Mucosa of descending colon (tissue), 3 donors: ENCODE measurements at regions of chrX and their contacts with region 1.

Region 1: GRCh38 chrX:68828740-68829552 is at the start of gene EFNB1:
- DNase-seq: peak; percentile 91 to 93 (median 93)
- ATAC-seq: peak; percentile 86
- H3K4me3 ChIP-seq: peak within 1 kb of the TSS; percentile 63
- H3K4me1 ChIP-seq: peaks cover 8% of the 10 kb centered on the region
- CTCF ChIP-seq: no peak
- total RNA-seq, gene EFNB1: 41.7 to 81.5 (median 66.3) TPM

Region 2: DNA sequence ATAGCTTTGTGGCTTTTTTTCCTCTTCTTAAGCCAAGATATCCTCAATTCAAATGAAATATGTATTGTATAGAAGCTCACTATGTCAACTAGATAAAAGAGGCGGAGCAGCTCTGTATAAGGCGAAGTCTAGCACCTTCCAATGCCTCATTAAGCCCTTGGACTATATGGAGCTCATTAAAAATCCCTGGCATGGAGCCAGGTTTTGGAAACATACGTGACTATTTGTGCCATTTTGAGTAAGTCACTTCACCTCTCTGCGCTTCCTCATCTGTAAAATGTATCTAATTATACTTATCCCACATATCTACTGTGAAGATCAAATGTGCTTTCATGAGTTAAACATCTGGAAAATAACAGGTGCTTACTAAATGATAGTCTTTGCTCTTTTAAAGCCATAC is 272.9 kb before region 1 on chrX:
- intact Hi-C with region 1: no loop called
- DNase-seq: no peak
- ATAC-seq: no peak
- H3K4me3 ChIP-seq: no peak overlapping the region
- H3K4me1 ChIP-seq: no peaks in the 10 kb centered on the region
- CTCF ChIP-seq: no peak

Region 3: DNA sequence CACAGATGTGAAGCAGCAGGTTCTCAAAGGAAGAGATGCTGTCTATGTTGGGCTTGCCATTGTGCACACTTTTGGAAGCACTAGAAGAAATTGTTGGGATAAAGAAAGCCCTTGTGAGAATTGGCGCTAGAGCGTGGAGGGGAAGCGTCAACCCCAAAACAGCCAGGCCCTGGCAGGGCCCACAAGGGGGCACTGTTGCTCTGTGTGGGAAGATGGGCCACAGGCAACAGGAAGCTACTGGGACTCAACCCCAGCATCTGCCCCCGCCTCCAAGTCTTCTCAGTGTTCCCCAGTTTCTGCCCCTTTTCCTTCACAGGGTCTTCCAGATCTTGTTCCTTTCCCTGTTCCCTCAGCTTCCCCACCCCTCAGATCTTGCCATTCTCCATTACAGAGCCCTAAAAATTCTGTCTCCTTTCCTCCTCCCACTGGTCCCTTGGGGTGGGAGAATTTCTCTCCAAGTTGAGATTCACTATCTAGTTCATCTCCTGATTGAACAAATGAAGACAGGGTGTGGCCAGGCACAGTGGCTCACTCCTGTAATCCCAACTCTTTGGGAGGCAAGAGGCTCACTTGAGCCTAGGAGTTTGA is 95.9 kb before region 1 on chrX:
- intact Hi-C with region 1: no loop called
- DNase-seq: peak in 2 of 3 donors; percentile 72 to 74
- ATAC-seq: peak; percentile 81
- H3K4me3 ChIP-seq: no peak overlapping the region
- H3K4me1 ChIP-seq: no peaks in the 10 kb centered on the region
- CTCF ChIP-seq: peak; percentile 21

Region 4: DNA sequence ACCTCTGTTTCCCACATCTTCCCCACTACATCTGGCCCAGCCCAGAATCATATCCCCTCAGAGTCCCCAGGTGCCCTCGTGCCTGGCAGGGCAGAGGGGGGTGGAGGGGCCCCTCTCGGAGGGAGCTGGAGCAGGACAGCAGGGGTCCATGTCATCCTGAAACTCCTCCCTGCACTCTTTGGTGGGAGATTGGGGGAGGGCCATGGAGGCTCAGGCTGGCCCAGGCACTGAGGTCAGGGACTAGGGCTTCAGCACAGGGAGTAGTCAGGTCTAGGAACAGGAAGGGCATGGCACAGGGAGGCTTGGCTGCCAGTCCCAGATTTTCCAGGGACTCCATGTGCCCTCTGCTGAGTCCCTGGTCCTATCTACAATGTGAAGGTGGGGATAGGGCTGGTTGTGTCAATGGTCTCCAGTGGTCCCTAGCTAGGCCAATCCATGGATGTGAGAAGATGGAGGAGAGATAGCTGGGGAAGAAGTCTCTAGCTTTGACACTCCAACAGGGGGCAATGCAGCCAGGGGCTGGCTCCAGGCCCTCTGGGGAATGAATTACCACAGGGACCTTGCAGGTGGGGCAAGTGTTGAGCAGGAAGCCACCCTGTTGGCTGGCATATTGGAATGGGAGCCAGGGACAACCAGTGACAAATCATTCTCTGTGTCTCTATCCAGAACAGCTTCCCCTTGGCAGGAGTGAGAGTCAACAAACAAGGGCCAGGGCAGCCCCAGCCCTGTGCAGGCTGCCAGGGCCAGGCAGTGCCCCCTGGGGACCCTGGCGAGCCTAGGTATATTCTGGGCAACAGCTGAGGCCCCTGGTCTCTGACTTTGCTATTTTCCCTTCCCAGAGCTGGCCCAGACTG is 154.3 kb after region 1 on chrX:
- intact Hi-C with region 1: no loop called
- DNase-seq: no peak
- ATAC-seq: peak; percentile 46
- H3K4me3 ChIP-seq: no peak overlapping the region
- H3K4me1 ChIP-seq: no peaks in the 10 kb centered on the region
- CTCF ChIP-seq: no peak

Region 5: GRCh38 chrX:69060631-69061408 is 231.9 kb after region 1 on chrX:
- intact Hi-C with region 1: loop called in 1 of 2 experiments (anchors 5 kb)
- DNase-seq: peak in 2 of 3 donors; percentile 43 to 69
- ATAC-seq: peak; percentile 74
- H3K4me3 ChIP-seq: no peak overlapping the region
- H3K4me1 ChIP-seq: no peaks in the 10 kb centered on the region
- CTCF ChIP-seq: no peak

Region 6: DNA sequence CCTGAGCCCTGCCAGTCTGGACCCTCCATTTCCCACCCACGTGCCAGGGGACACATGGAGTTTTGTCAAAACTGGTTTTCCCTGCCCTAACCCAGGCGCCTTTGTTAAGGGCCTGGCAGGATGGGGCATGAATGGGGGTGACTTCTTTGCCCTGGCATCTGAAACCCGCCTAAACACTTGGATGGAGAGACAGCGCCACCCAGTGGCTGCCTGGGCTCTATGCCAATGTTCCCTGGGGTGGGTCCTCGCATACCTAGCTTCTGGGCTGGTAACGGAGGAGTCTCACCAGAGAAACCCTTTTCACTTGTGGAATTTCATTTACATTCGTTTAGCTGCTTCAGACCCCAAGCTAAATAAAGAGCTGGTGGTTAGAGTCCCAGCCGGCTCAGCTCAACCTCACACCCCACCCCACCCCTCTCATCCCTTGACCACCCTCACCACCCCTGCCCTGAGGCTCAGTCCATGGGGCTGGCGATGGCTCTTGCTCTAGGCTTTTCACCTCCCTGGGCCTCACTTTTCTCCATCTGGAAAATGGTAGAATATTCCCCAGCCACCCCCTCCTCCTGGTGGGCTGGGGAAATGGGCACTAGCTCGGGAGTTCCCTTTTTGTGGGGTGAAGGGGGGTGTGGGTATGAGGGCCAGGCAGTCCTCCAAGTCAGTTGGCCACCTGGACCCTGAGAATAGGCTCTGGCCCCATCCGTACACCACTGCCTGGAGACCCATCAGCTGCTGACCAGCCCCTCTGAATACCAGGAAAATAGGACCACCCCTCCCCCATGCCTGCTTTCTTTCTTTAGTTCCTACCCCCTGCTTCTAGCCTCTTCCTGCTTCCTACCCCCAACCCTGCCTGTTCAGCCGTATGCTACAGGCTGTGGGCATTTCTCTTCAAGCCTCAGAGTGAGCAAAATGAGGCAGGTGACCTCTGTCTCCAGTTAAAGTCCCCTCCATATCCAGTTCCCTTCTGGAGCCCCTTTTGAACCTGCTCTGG is 393.5 kb after region 1 on chrX:
- intact Hi-C with region 1: loop called (anchors 5 to 10 kb)
- DNase-seq: peak in 2 of 3 donors; percentile 73 to 74
- ATAC-seq: peak; percentile 72
- H3K4me3 ChIP-seq: no peak overlapping the region
- H3K4me1 ChIP-seq: no peaks in the 10 kb centered on the region
- CTCF ChIP-seq: peak; percentile 42

Region 7: GRCh38 chrX:69285881-69286564 is 457.1 kb after region 1 on chrX:
- intact Hi-C with region 1: loop called (anchors 10 kb)
- DNase-seq: peak; percentile 64 to 72 (median 71)
- ATAC-seq: peak; percentile 84
- H3K4me3 ChIP-seq: no peak overlapping the region
- H3K4me1 ChIP-seq: no peaks in the 10 kb centered on the region
- CTCF ChIP-seq: peak; percentile 50